OCI-LY7 (cell line): ENCODE measurements at regions of chr21 and their contacts with region 1.

Region 1: GRCh38 chr21:26850108-26850643 is 5.0 kb upstream of the ADAMTS1 start:
- DNase-seq: peak; percentile 31
- H3K4me3 ChIP-seq: no peak overlapping the region
- H3K27ac ChIP-seq: no peak overlapping the region
- H3K4me1 ChIP-seq: no peaks in the 10 kb centered on the region
- CTCF ChIP-seq: peak; percentile 78

Region 2: GRCh38 chr21:26788790-26789189 is 61.4 kb before region 1 on chr21:
- CTCF ChIA-PET with region 1: no interaction called
- POLR2A ChIA-PET with region 1: no interaction called
- intact Hi-C with region 1: no loop called
- DNase-seq: no peak
- H3K4me3 ChIP-seq: no peak overlapping the region
- H3K27ac ChIP-seq: no peak overlapping the region
- H3K4me1 ChIP-seq: no peaks in the 10 kb centered on the region
- CTCF ChIP-seq: no peak

Region 3: DNA sequence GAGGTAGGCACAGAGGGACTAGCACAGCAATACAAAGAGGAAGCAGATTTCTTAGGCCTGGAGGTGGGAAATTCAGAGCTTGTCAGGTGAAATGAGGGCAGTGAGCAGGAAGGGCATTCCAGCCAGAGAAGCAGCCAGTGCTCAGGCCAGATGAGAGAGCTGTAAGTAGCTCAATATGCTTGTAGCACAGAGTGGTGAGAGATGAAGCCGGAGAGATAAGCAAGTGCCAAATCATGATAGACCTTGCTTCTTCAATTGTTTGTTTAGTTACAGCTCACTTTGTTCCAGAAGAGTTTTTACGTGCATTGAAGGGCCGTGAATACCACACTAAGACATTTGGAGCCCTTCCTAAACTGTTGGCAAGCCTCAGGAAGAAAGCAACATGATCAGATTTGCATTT is 37.1 kb after region 1 on chr21:
- CTCF ChIA-PET with region 1: no interaction called
- POLR2A ChIA-PET with region 1: no interaction called
- intact Hi-C with region 1: no loop called
- DNase-seq: no peak
- H3K4me3 ChIP-seq: no peak overlapping the region
- H3K27ac ChIP-seq: no peak overlapping the region
- H3K4me1 ChIP-seq: no peaks in the 10 kb centered on the region
- CTCF ChIP-seq: no peak

Region 4: DNA sequence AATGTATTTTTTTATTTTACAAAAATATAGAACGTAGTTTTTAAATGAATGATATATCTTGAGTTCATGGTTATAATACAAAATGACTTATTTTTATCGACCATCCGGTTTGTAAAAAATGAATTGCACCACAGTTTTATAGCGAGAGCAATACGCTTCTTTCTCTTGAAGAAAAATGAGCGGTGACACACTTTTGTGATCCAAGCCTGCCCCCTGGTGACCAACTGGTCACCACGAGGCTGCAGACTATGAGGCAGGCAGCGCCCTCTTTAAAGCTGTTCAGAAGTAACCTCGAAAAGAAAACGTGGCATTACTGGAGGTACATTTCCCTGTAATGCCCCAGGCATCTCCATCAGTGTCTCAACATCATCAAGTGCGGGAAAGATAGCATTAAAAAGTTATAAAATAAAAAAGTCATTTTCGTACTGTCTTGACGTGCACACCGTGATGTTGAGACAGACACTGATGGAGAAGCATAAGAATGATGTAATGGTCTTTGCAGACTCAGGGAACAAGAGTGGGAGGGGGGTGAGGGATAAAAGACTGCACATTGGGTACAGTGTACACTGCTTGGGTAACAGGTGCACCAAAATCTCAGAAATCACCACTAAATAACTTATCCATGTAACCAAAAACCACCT is 850.9 kb after region 1 on chr21:
- CTCF ChIA-PET with region 1: no interaction called
- POLR2A ChIA-PET with region 1: no interaction called
- intact Hi-C with region 1: loop called (anchors 5 kb)
- DNase-seq: peak; percentile 31
- H3K4me3 ChIP-seq: no peak overlapping the region
- H3K27ac ChIP-seq: no peak overlapping the region
- H3K4me1 ChIP-seq: no peaks in the 10 kb centered on the region
- CTCF ChIP-seq: peak; percentile 73

Region 5: DNA sequence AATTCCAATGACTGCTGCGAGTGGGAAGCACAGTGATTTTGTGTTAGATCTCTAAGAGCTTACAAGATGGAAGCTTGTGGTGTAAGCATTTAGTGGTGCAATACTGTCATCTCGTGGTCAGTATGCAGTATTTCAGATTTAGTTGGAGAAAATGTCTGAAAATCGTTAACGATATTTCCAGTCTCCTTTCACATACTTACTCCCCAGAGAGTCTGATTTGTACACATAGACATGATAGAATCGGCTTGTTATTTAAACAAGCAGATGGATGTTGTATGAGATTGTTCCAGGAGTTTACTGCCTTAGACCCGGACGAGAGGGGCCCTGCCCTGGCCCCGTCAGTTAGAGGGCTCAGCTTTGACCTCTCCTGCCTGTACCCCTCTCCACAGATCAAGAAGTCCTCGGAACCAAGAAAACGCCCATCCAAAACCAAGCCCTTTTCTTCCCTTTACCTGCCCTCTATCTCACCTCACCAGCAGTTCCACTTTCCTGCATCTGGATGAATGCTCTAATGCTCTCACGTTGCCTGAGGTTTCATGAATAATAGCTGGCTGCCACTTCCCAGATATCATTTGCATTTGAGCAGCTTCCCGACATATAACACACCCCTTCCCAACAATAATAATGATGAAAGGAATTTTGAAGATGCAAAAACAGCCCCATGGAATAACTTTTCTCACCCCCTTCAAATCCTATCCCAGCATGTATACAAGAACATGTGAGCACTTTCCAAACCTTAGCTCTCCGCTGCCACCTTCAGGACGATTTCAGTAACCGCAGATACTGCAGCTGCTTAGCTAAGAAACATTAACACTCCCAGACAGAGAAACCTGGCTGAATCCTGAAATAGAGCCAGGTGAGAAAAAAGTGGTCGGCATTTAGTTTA is 1895.2 kb after region 1 on chr21:
- CTCF ChIA-PET with region 1: interaction called, 4 read pairs
- POLR2A ChIA-PET with region 1: no interaction called
- intact Hi-C with region 1: loop called (anchors 1 kb)
- DNase-seq: peak; percentile 79
- H3K4me3 ChIP-seq: peak overlapping the region; percentile 41
- H3K27ac ChIP-seq: no peak overlapping the region
- H3K4me1 ChIP-seq: peaks cover 5% of the 10 kb centered on the region
- CTCF ChIP-seq: peak; percentile 89